ENCODE measurements at regions of chr7 and their contacts with region 1.

Region 1: GRCh38 chr7:101126651-101127280 is at the start of gene SERPINE1:
- DNase-seq: peak; percentile 98
- ATAC-seq: peak; percentile 73 to 78
- H3K4me3 ChIP-seq: peak within 1 kb of the TSS; percentile 63
- H3K27ac ChIP-seq: peak within 1 kb of the TSS; percentile 94 to 95
- H3K4me1 ChIP-seq: peaks cover 78% of the 10 kb centered on the region
- CTCF ChIP-seq: peak; percentile 29; the same call in 2 of the 3 replicates
- EP300 ChIP-seq: 0 out of 5 replicates have a peak, but pooled peaks of 1 of the 2 experiments have one; percentile 10
- POLR2A ChIP-seq: peak; percentile 98
- RAD21 ChIP-seq: peak in 1 of 2 experiments; percentile 8; a peak in 2 of 5 replicates
- polyA plus RNA-seq, gene SERPINE1: 300 and 355 TPM in 2 replicates

Region 2: DNA sequence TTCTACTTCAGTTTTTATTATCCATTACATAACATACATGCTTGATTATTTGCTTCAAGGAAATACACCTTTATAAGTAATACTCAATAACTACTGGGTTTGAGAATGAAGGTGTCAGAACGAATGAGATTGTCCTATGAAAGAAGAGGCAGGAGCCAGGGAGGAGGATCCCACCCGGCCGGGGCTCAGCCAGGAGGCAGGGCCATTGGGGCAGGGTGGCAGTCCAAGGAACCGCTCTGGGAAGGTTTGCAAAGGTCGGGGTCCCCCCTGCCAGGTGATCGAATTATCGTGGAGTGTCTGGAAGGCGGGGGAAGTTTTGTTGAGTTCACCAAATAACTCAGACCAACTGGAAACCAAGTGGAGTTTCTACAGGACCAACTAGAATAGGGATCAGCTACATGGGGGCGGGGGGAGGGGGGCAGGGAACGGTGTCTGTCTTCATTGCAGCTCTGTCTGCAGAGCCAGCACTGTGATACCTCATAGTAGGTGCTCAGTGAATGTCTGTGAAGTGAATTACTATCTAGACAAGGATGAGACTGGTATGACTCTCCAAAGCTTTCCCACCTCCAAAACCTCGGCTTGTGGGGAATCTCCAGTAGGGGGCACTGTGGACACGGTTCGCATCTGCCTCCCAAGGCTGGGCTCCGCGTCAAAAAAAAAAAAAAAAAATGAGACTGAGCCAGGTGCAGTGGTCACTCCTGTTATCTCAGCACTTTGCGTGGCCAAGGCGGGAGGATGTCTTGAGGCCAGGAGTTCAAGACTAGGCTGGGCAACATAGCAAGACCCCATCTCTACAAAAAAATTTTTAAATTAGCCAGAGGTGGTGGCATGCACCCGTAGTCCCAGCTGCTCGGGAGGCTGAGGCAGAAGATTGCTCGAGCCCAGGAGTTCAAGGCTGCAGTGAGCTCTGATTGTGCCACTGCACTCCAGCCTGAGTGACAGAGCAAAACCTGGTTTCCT is 32.1 kb before region 1 on chr7:
- CTCF ChIA-PET with region 1: interaction called, 600 read pairs
- POLR2A ChIA-PET with region 1: interaction called, 41 read pairs
- DNase-seq: peak; percentile 60 to 79
- ATAC-seq: peak; percentile 83 to 85
- H3K4me3 ChIP-seq: no peak overlapping the region
- H3K27ac ChIP-seq: peak overlapping the region; percentile 50 to 94
- H3K4me1 ChIP-seq: peaks cover 35% of the 10 kb centered on the region
- CTCF ChIP-seq: peak; percentile 84
- EP300 ChIP-seq: no peak
- POLR2A ChIP-seq: no peak
- RAD21 ChIP-seq: peak; percentile 82 to 86

Region 3: DNA sequence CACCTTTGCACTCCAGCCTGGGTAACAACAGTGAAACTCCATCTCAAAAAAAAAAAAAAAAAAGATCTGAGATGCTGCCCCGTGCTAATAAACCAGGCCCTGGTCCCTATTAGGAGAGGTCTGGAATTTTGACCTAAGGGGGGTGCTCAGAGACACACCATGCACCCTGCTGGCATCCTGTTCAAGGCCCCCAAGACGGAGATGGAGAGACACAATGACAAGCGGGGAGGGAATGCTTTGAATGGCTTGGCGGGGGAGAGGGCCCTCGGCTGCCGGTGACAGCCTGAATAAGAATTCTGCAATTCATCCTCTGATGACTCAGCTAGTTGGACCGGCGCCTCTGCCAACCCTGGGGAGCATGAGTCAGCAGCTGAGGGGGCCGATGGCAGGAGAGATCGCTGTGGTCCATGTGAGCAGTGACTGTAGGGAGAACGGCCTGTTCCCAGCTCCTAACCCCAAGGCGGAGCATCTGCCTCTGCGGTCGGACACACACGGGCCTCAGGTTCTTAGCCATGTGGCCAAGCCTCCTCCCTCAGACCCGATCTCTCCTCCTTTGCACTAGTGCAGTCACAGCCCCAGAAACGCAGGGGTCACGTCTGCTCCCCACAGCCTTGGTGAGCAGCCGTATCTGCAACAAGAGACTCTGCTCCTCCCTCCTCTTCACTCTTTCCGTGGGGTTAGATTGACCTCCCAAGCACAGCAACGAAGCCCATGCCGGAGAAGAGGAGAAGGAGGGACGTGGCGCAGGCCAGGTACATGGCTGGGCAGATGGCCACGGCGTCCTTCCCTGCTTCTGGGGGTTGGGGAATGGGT is 26.6 kb before region 1 on chr7:
- CTCF ChIA-PET with region 1: interaction called, 600 read pairs
- POLR2A ChIA-PET with region 1: interaction called, 41 read pairs
- DNase-seq: peak; percentile 91 to 98
- ATAC-seq: peak; percentile 90 to 96
- H3K4me3 ChIP-seq: no peak overlapping the region; the same call in 2 of the 3 replicates
- H3K27ac ChIP-seq: peak overlapping the region; percentile 94 to 99
- H3K4me1 ChIP-seq: peaks cover 69% of the 10 kb centered on the region
- CTCF ChIP-seq: no peak
- EP300 ChIP-seq: peak; percentile 90 to 94
- POLR2A ChIP-seq: peak; percentile 22; the same call in 1 of the 2 replicates
- RAD21 ChIP-seq: peak; percentile 38 to 49

Region 4: GRCh38 chr7:101108330-101108857 is 18.4 kb before region 1 on chr7:
- CTCF ChIA-PET with region 1: interaction called, 600 read pairs
- POLR2A ChIA-PET with region 1: interaction called, 14 read pairs
- DNase-seq: no peak
- ATAC-seq: peak in 1 of 2 experiments; percentile 22; a peak in 4 of 6 replicates
- H3K4me3 ChIP-seq: no peak overlapping the region
- H3K27ac ChIP-seq: peak overlapping the region; percentile 74 to 94
- H3K4me1 ChIP-seq: peaks cover 39% of the 10 kb centered on the region
- CTCF ChIP-seq: no peak
- EP300 ChIP-seq: no peak
- POLR2A ChIP-seq: no peak
- RAD21 ChIP-seq: no peak

Region 5: DNA sequence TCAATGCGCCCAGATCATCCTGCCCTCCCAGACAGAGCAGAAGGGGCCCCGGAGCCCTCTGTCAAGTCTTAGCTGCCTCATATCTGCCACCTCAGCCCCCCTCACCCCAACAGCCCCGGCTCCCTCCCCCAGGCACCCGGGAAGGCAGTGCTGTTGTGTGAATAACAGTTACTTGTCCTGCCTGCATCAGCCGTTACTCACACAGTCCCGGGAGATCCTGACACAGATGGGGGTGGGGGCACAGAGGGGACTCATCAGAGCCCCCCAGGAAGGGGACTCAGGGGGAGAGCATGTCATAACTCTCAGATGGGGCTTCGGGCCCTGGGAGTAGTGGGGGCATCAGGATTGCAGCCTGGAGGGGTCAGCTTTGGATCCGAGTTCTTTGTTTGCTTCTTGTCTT is 12.3 kb before region 1 on chr7:
- CTCF ChIA-PET with region 1: interaction called, 600 read pairs
- POLR2A ChIA-PET with region 1: interaction called, 51 read pairs
- DNase-seq: no peak
- ATAC-seq: no peak; a peak in 1 of 6 replicates
- H3K4me3 ChIP-seq: no peak overlapping the region
- H3K27ac ChIP-seq: peak overlapping the region; percentile 94 to 95
- H3K4me1 ChIP-seq: peaks cover 52% of the 10 kb centered on the region
- CTCF ChIP-seq: no peak
- EP300 ChIP-seq: no peak
- POLR2A ChIP-seq: no peak
- RAD21 ChIP-seq: no peak

Measured in A549 (cell line).